IMR-90 (cell line): ENCODE measurements at regions of chr7 and their contacts with region 1.

Region 1: GRCh38 chr7:22001345-22002004 is 55.8 kb upstream of the CDCA7L start:
- DNase-seq: peak; percentile 80
- ATAC-seq: peak; percentile 98
- H3K4me3 ChIP-seq: no peak overlapping the region
- H3K27ac ChIP-seq: no peak overlapping the region
- H3K4me1 ChIP-seq: 0 out of 2 replicates have a peak, but pooled peaks cover 3% of the 10 kb centered on the region
- H3K27me3 ChIP-seq: no peaks in the 10 kb centered on the region; the same call in 1 of the 2 replicates
- CTCF ChIP-seq: peak; percentile 88
- POLR2A ChIP-seq: no peak
- RAD21 ChIP-seq: peak; percentile 91

Region 2: DNA sequence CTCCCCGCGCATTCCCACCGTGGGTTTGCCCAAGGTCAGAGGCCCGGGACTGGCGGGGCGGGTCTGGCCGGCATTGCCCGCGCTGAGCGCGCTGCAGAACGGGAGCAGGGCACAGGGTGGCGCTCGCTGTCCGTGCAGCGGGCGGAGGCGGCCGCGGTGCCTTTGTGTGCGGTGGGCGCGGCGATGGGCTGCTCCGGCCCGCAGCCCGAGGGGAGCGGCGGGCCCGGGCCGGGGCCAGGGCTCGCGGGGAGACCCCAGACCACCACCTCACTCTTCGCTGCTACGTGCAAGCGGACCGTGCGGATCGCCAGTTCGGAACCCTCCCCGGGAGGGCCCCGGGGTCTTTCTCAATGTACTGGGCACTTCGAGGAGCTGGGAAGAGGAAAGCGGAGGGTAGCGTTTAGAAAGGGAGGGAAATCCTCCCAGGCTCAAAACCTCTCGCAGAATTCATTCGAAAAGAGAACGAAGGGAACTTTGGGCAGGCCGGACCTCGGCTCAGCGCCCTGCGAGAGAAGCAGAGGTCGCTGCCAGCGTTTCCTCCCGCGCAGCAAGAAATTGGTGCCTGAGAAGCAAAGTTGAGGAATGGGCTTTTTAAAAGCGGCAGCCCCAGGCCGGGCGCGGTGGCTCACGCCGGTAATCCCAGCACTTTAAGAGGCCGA is 1223.3 kb before region 1 on chr7:
- CTCF ChIA-PET with region 1: interaction called, 3 read pairs
- POLR2A ChIA-PET with region 1: no interaction called
- dilution Hi-C with region 1: no loop called
- in situ Hi-C with region 1: loop called (anchors 10 kb)
- intact Hi-C with region 1: loop called (anchors 2 kb)
- DNase-seq: no peak
- ATAC-seq: peak; percentile 98
- H3K4me3 ChIP-seq: peak overlapping the region; percentile 20
- H3K27ac ChIP-seq: no peak overlapping the region
- H3K4me1 ChIP-seq: no peaks in the 10 kb centered on the region
- H3K27me3 ChIP-seq: peaks cover 45% of the 10 kb centered on the region
- CTCF ChIP-seq: peak; percentile 52
- POLR2A ChIP-seq: no peak
- RAD21 ChIP-seq: peak; percentile 64

Region 3: DNA sequence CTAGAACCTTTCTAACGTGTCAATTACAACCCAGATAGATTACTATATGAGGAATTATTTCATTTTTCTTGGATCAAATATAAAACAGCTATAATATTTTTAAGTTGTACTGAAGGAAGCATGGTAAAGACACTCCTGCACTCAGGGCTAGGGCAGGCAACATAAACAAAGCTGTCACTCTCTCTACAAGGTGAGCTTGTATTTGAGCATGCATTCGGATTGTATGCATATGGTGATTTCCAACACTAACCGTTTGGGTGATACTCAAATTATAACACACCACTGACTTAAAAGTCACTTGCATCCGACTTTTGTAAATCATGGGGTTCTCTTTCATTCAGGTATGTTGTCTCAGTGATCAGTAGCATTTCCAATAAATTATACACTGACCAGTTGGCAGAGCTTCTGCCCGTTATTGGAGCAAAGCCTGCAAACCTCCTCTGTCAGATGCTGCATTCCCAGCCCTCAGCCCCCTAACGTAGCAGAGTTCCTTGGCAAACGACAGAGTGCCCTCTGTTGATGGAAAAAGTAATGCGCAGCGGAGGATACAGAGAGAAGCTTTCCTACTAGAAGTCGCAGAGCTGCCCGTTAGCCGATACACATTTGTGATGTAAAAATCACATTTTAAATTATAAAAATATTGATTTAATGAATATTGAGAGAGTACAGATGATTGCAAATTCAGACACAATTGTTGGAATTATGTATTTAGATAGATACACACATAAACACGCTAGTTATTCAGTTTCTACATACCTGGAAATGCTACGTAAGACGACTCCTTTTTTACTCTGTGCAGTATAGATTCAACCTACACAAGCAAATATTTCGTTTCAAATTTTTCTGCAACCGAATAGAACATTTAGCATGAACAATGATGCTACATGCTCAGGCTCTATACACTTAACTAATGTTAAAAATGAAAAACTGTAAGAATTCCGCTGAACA is 747.5 kb before region 1 on chr7:
- CTCF ChIA-PET with region 1: no interaction called
- POLR2A ChIA-PET with region 1: no interaction called
- dilution Hi-C with region 1: no loop called
- in situ Hi-C with region 1: loop called (anchors 10 kb)
- intact Hi-C with region 1: loop called (anchors 1 kb)
- DNase-seq: peak; percentile 26
- ATAC-seq: peak; percentile 69; the same call in 1 of the 2 replicates
- H3K4me3 ChIP-seq: no peak overlapping the region
- H3K27ac ChIP-seq: no peak overlapping the region
- H3K4me1 ChIP-seq: no peaks in the 10 kb centered on the region
- H3K27me3 ChIP-seq: no peaks in the 10 kb centered on the region
- CTCF ChIP-seq: peak; percentile 51
- POLR2A ChIP-seq: no peak
- RAD21 ChIP-seq: peak; percentile 34; the same call in 1 of the 2 replicates

Region 4: DNA sequence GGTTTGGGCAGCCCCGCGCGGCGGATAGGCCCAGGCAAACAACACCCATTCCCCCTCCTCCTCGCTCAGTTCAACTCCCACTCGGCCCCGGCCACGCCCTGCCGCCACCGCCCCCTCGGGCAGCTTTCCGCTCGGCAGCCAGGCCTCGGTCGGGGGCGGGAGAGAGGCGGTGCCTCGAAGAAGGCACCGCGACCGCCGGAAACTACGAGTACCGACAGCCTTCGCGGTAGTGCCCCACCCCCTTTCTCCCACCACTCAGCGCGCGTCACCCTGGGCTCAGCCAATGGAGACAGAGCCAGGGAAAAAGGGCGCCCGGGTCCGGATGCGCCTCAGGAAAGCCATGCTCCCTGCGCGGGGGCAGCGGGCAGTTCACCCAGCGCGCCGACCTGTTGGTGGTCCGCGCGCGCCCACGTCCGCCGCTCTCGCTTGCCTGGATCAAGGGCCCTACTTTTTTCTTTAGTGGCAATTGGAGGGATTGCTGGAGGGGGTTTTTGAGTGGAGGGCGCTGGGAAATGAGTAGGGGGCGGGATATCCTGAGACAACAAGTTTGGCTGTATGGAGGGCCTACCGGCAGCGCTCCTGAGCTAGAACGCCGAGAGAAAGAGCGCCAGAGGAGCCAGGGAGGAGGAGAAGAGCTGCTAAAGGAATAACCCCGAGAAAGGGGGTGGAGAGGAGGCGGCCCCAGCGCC is 574.1 kb before region 1 on chr7:
- CTCF ChIA-PET with region 1: no interaction called
- POLR2A ChIA-PET with region 1: no interaction called
- dilution Hi-C with region 1: no loop called
- in situ Hi-C with region 1: no loop called
- intact Hi-C with region 1: loop called (anchors 2 kb)
- DNase-seq: peak; percentile 97
- ATAC-seq: peak; percentile 82
- H3K4me3 ChIP-seq: peak overlapping the region; percentile 61
- H3K27ac ChIP-seq: peak overlapping the region; percentile 22; the same call in 1 of the 2 replicates
- H3K4me1 ChIP-seq: peaks cover 4% of the 10 kb centered on the region; the same call in 1 of the 2 replicates
- H3K27me3 ChIP-seq: no peaks in the 10 kb centered on the region
- CTCF ChIP-seq: no peak
- POLR2A ChIP-seq: peak; percentile 76
- RAD21 ChIP-seq: no peak

Region 5: GRCh38 chr7:21945454-21946227 is 55.8 kb before region 1 on chr7 and contains the start of gene CDCA7L:
- CTCF ChIA-PET with region 1: no interaction called
- POLR2A ChIA-PET with region 1: no interaction called
- dilution Hi-C with region 1: no loop called
- in situ Hi-C with region 1: no loop called
- intact Hi-C with region 1: loop called (anchors 2 kb)
- DNase-seq: peak; percentile 63
- ATAC-seq: peak; percentile 97
- H3K4me3 ChIP-seq: peak within 1 kb of the TSS; percentile 81
- H3K27ac ChIP-seq: peak within 1 kb of the TSS; percentile 90
- H3K4me1 ChIP-seq: peaks cover 3% of the 10 kb centered on the region; the same call in 1 of the 2 replicates
- H3K27me3 ChIP-seq: 0 out of 2 replicates have a peak, but pooled peaks cover 2% of the 10 kb centered on the region
- CTCF ChIP-seq: no peak
- POLR2A ChIP-seq: 0 out of 2 replicates have a peak, but pooled peaks have one; percentile 59
- RAD21 ChIP-seq: no peak
- total RNA-seq, gene CDCA7L: 35.0 and 40.8 TPM in 2 replicates